ENCODE measurements at regions of chr19 and their contacts with region 1.

Region 1: GRCh38 chr19:2273356-2274184 is 8.4 kb downstream of the PEAK3 start:
- DNase-seq: peak; percentile 90
- CTCF ChIP-seq: peak; percentile 95

Region 2: GRCh38 chr19:2236314-2237050 is 37.1 kb before region 1 on chr19 and contains the starts of genes PLEKHJ1 and SF3A2:
- CTCF ChIA-PET with region 1: interaction called, 37 read pairs
- POLR2A ChIA-PET with region 1: no interaction called
- DNase-seq: peak; percentile 99
- CTCF ChIP-seq: peak; percentile 99

Region 3: DNA sequence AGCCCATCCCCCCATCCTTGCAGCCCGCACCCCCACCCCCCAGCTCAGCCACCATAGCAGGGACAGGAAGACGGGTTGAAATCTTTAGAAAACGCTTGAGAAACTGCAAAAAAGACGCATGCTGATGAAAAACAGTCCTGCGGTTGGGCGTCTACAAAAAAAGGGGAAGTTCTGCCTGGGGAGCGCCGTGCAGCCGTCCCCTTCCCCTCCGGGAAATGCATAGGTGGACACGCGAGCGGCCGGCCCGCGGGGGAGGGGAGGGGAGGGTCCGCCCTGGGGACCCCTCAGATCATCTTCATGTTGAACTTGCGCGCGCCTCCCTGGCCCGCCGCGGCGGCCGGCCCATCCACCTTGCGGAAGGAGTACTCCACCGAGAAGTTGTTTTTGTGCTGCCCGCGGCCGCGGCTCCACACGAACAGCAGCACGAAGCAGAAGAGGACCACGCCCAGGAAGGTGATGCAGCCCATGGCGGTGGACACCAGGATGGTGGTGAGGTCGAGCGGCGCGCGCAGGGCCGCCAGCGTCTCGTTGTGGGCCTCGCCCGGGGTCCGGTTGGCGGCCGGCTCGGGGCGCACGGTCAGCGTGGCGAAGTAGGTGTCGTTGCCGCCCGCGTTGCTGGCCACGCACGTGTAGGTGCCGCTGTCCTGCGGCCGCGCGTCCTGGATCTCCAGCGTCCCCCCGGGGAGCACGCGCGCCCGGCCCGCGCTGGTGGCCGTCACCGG is 16.3 kb after region 1 on chr19:
- CTCF ChIA-PET with region 1: interaction called, 28 read pairs
- POLR2A ChIA-PET with region 1: interaction called, 5 read pairs
- DNase-seq: peak; percentile 85
- CTCF ChIP-seq: no peak

Region 4: GRCh38 chr19:2391118-2391725 is 117.7 kb after region 1 on chr19:
- CTCF ChIA-PET with region 1: interaction called, 13 read pairs
- POLR2A ChIA-PET with region 1: no interaction called
- DNase-seq: peak; percentile 61
- CTCF ChIP-seq: peak; percentile 74